Lower lobe of right lung (tissue), 2 donors: ENCODE measurements at regions of chr3 and their contacts with region 1.

Region 1: DNA sequence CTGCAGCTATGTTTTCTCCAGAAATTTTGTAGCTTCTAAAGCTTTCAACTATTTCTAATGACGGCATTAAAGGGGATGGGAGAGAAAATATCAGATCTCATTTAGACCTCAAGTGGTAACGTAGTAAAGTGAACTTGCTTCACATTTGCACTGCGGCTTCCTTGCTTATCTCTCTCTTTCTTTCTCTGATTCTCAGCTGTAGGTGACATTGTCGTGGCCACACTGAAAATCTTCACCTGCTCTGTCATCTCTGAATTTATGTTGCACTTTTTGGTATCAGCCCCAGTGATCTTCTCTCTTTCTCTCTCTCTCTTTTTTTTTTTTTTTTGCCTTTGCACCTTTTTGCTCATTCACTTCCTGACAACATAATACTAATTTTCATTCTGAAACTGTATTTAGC is 254.1 kb upstream of the SATB1 start:
- DNase-seq: no peak
- ATAC-seq: no peak
- H3K4me3 ChIP-seq: no peak overlapping the region
- H3K27ac ChIP-seq: no peak overlapping the region
- H3K4me1 ChIP-seq: no peaks in the 10 kb centered on the region
- H3K27me3 ChIP-seq: no peaks in the 10 kb centered on the region
- CTCF ChIP-seq: no peak

Region 2: DNA sequence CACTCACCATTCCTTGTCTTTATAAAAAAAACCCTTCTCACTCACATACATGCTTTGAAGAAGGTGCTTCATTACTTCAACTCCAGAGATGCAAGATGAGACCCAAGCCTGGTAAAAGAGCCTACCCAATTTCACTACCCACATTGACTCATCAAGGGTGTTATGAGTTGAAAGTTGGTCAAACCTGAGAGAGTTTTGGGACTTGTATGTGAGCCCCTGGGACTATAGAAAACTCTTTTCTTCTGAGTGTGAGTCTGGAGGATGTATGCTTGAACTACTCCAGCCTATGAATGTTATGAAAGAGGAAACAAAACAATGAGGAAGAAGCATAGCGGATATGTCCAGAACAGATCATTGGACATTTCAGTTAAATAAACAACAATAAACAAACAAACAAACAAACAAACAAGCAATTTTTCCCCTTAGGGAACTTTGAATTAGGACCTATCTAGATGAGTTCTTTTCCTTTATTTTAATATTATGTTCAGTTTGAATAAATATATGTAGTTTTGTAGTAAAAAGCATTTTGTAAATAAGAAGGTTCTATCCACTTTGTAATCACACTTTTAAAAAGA is 147.5 kb before region 1 on chr3:
- intact Hi-C with region 1: no loop called
- DNase-seq: no peak
- ATAC-seq: no peak
- H3K4me3 ChIP-seq: no peak overlapping the region
- H3K27ac ChIP-seq: no peak overlapping the region
- H3K4me1 ChIP-seq: no peaks in the 10 kb centered on the region
- H3K27me3 ChIP-seq: no peaks in the 10 kb centered on the region
- CTCF ChIP-seq: no peak

Region 3: DNA sequence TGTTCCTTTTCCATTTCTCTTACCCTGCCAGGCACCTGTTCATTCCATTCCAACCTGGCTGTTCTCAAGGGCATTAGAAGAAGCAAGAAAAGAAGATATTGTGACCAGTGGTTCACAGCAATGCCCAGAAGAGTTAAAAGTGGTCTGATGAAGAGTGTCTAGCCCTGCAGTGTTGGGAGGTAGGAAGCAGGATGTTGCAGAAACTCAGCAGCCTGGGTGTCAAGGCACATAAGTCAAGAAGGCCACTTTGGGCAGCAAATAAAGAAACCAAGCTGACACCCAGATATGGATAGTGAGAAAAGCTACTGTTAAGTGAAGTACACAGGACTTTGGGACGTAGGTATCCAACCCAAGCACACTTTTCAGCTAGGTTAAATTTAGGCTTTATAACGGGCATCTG is 54.2 kb before region 1 on chr3:
- intact Hi-C with region 1: loop called (anchors 5 kb)
- DNase-seq: no peak
- ATAC-seq: no peak
- H3K4me3 ChIP-seq: no peak overlapping the region
- H3K27ac ChIP-seq: no peak overlapping the region
- H3K4me1 ChIP-seq: no peaks in the 10 kb centered on the region
- H3K27me3 ChIP-seq: no peaks in the 10 kb centered on the region
- CTCF ChIP-seq: no peak